CD4-positive, alpha-beta T cell (primary cell): ENCODE measurements at regions of chr11 and their contacts with region 1.

Region 1: GRCh38 chr11:118768690-118769089 is 22.3 kb downstream of the DDX6 start:
- DNase-seq: no peak
- ATAC-seq: no peak
- H3K4me3 ChIP-seq: no peak overlapping the region
- H3K4me3 Mint-ChIP-seq: peak overlapping the region; percentile 30
- H3K27ac ChIP-seq: no peak overlapping the region
- H3K27ac Mint-ChIP-seq: peak overlapping the region; percentile 44
- H3K4me1 ChIP-seq: peaks cover 41% of the 10 kb centered on the region
- H3K4me1 Mint-ChIP-seq: peaks cover 73% of the 10 kb centered on the region
- H3K27me3 ChIP-seq: no peaks in the 10 kb centered on the region
- H3K27me3 Mint-ChIP-seq: no peaks in the 10 kb centered on the region
- CTCF ChIP-seq: no peak

Region 2: DNA sequence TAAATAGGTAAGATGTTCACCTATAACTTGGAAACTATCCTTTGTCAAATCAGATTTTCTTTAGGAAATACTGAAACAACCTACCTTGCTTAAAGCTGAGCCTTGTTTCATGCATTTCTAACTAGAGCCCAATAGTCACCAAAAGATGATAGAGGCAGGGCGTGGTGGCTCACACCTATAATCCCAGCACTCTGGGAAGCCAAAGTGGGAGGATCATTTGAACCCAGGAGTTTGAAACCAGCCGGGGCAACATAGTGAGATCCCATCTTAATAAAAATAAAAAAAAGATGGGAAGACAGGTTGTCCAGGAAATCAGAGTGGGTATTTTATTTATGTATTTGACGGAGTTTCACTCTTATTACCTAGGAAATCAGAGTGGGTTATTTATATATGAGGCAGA is 16.0 kb before region 1 on chr11:
- CTCF ChIA-PET with region 1: no interaction called
- POLR2A ChIA-PET with region 1: no interaction called
- intact Hi-C with region 1: loop called in 1 of 2 experiments (anchors 2 kb)
- DNase-seq: no peak
- ATAC-seq: no peak
- H3K4me3 ChIP-seq: no peak overlapping the region
- H3K4me3 Mint-ChIP-seq: no peak overlapping the region
- H3K27ac ChIP-seq: no peak overlapping the region
- H3K27ac Mint-ChIP-seq: peak overlapping the region; percentile 57
- H3K4me1 ChIP-seq: no peaks in the 10 kb centered on the region
- H3K4me1 Mint-ChIP-seq: peaks cover 13% of the 10 kb centered on the region
- H3K27me3 ChIP-seq: no peaks in the 10 kb centered on the region
- H3K27me3 Mint-ChIP-seq: no peaks in the 10 kb centered on the region
- CTCF ChIP-seq: no peak

Region 3: DNA sequence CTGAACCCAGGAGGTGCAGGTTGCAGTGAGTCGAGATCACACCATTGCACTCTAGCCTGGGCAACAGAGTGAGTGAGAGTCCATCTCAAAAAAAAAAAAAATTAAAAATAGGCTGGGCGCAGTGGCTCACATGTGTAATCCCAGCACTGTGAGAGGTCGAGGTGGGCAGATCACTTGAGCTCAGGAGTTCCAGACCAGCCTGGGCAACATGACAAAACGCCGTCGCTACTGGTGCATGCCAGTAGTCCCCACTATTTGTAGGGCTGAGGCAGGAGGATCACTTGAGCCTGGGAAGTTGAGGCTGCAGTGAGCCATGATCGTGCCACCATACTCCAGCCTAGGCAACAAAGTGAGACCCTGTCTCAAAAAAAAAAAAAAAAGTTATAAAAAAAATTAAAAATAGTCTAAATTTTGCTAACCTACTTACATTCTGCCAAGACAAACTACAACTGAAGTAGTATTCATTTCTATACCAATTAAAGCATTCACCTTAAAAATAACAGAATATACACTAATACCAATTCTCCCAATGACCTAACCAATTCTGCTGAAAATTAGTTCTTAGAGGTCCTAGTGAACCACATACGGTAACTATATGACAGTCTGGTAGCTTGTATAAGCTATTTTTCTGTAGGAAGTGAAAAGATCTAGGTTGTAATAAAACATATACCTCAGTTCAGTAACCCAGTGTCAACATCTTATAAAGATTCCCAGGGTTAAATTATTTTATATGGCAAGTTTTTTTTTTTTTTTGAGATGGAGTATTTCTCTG is 15.2 kb after region 1 on chr11:
- CTCF ChIA-PET with region 1: interaction called, 3 read pairs
- POLR2A ChIA-PET with region 1: interaction called, 4 read pairs
- intact Hi-C with region 1: loop called in 1 of 2 experiments (anchors 2 kb)
- DNase-seq: no peak
- ATAC-seq: no peak
- H3K4me3 ChIP-seq: no peak overlapping the region
- H3K4me3 Mint-ChIP-seq: peak overlapping the region; percentile 69
- H3K27ac ChIP-seq: no peak overlapping the region
- H3K27ac Mint-ChIP-seq: peak overlapping the region; percentile 72
- H3K4me1 ChIP-seq: peaks cover 64% of the 10 kb centered on the region
- H3K4me1 Mint-ChIP-seq: peaks cover 69% of the 10 kb centered on the region
- H3K27me3 ChIP-seq: no peaks in the 10 kb centered on the region
- H3K27me3 Mint-ChIP-seq: no peaks in the 10 kb centered on the region
- CTCF ChIP-seq: no peak

Region 4: GRCh38 chr11:119121008-119121810 is 352.5 kb after region 1 on chr11 and contains the start of gene HINFP:
- CTCF ChIA-PET with region 1: no interaction called
- POLR2A ChIA-PET with region 1: no interaction called
- intact Hi-C with region 1: no loop called
- DNase-seq: peak; percentile 99 to 100 (median 100)
- ATAC-seq: peak; percentile 96
- H3K4me3 ChIP-seq: peak within 1 kb of the TSS; percentile 92
- H3K4me3 Mint-ChIP-seq: peak within 1 kb of the TSS; percentile 91
- H3K27ac ChIP-seq: peak within 1 kb of the TSS; percentile 75 to 76
- H3K27ac Mint-ChIP-seq: peak within 1 kb of the TSS; percentile 85
- H3K4me1 ChIP-seq: peaks cover 29% of the 10 kb centered on the region
- H3K4me1 Mint-ChIP-seq: peaks cover 47% of the 10 kb centered on the region
- H3K27me3 ChIP-seq: no peaks in the 10 kb centered on the region
- H3K27me3 Mint-ChIP-seq: no peaks in the 10 kb centered on the region
- CTCF ChIP-seq: no peak
- total RNA-seq, gene HINFP: 17.6 to 20.5 TPM